ENCODE measurements at regions of chr2 and their contacts with region 1.

Region 1: DNA sequence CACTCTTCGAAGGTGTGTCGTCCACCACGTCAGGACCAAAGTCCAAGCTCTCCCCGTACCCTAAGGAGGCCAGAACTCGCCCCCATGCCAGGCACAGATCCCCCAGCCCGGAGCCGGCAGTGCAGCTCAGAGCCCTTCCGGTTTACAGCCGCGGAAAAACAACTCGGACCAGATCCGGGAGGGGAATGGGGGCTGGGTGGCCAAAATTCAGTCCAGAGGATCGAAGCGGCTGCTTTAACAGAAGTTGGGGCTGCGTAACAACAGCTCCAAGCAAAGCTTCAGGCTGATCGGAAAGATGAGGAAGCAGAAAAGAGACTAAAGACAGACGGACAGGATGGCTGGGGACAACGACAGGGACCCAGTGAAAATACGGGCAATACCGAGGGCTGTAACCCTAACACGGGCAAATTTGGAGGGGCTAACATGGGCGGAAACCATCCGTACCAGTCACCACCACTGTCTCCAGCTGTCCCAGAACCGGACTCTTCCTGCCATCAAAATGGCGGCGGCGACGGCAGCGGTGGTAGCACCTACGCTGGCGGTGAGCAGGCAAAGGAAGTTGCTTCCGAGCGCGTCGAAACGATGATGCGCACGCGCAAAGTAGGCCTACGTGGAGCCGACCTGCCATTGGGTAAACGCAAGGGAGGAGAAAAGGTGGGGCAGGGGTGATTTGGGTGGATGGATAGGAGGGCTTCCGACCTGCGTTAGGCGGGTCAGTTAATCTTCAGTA is at the start of gene MMADHC:
- DNase-seq: peak; percentile 87
- CTCF ChIP-seq: no peak

Region 2: DNA sequence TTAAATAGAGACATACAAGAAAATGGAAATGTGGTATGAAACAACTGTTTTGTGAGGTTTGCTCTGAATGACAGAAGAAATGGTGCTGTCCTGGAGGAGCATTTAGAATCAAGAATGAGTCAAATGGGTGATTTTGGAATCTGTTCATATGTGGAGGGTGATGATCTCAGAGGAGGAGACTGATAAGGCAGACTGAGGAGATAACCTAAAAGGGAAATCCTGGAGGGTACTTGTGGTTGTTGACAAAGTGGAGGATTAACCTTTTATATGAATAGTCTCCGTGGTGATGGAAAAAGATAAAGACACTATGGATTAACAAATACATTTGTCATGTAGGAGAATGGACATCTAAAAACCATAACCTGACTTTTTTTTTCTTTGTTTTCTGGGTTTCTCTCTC is 73.9 kb before region 1 on chr2:
- CTCF ChIA-PET with region 1: no interaction called
- POLR2A ChIA-PET with region 1: no interaction called
- DNase-seq: no peak
- CTCF ChIP-seq: no peak

Region 3: GRCh38 chr2:149561309-149561926 is 26.0 kb before region 1 on chr2:
- CTCF ChIA-PET with region 1: interaction called, 11 read pairs
- POLR2A ChIA-PET with region 1: no interaction called
- DNase-seq: peak; percentile 22
- CTCF ChIP-seq: peak; percentile 72

Region 4: DNA sequence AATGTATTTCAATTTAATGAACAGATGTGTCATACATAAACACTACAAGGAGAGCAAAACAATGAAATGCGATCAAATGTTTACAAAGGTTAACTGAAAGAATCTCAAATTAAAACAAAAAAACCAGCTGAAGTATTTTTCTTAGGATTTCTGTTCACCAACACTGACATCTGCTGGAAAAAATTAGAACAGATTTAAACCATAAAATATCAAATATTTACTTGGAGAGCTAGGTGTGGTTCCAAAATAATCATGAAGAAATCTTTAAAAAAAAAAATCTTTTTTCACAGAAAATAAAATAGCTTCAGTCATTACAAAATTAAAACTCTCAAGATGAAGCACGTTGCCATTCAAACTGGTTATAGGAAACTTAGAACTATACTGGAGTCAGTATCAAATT is 13.6 kb before region 1 on chr2:
- CTCF ChIA-PET with region 1: interaction called, 15 read pairs
- POLR2A ChIA-PET with region 1: no interaction called
- DNase-seq: no peak
- CTCF ChIP-seq: peak; percentile 25